ENCODE measurements at regions of chr4 and their contacts with region 1.

Region 1: DNA sequence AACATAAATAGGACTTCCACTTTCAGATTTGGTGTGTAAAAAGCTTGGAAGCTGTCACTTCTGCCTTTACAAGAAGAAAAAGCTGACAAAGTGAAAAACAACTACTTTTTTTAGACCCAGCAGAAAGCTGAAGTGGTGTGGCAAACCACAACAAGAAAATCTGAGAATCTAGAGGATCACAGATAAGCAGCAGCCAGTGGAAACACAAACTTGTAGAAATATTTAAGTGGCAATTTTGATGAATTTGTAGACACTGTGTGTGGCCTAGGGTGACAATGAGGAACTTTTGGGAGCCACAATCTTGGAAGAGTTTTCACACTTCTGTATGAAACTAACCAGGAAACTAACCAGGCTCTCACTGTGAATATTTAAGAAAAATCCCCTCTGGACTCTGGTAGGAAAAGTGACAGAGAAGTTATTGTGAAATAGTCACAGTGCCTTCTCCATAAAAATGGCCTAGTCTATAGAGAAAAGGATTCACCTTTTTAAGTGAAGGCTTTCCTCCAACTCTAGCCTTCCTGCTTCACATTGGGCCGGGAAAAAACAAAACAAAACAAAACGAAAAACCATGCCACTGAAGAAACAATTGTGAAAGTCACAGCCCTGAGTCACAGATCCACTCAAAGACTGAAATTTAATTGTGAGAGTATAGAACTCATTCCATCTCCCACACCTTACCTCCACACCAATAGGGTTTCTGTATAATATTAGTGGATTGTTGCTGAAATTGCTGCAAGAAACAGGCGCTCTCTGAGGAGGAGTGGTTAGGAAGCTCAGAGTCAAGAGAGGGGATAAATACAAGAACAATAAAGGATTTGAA is 26.7 kb upstream of the GUCY1A1 start:
- H3K4me3 Mint-ChIP-seq: peak overlapping the region; percentile 52
- H3K27ac Mint-ChIP-seq: peak overlapping the region; percentile 92
- H3K4me1 Mint-ChIP-seq: peaks cover 41% of the 10 kb centered on the region
- H3K27me3 Mint-ChIP-seq: no peaks in the 10 kb centered on the region

Region 2: GRCh38 chr4:155675709-155676429 is 36.0 kb after region 1 on chr4:
- intact Hi-C with region 1: loop called (anchors 5 kb)
- H3K4me3 Mint-ChIP-seq: peak overlapping the region; percentile 21
- H3K27ac Mint-ChIP-seq: peak overlapping the region; percentile 20
- H3K4me1 Mint-ChIP-seq: peaks cover 29% of the 10 kb centered on the region
- H3K27me3 Mint-ChIP-seq: no peaks in the 10 kb centered on the region

Measured in dendritic cell treated with granulocyte-macrophage colony-stimulating factor and Interleukin-4, amounts not matched to agents 40 ng/mL and 50 ng/mL, for 4 days (primary cell).